Breast epithelium (tissue), 4 donors: ENCODE measurements at regions of chr19 and their contacts with region 1.

Region 1: GRCh38 chr19:9044449-9044848 is 34.2 kb upstream of the MUC16 start:
- DNase-seq: no peak
- H3K4me3 ChIP-seq: no peak overlapping the region
- H3K27ac ChIP-seq: no peak overlapping the region
- H3K4me1 ChIP-seq: no peaks in the 10 kb centered on the region
- H3K27me3 ChIP-seq: no peaks in the 10 kb centered on the region
- CTCF ChIP-seq: no peak
- POLR2A ChIP-seq: no peak

Region 2: DNA sequence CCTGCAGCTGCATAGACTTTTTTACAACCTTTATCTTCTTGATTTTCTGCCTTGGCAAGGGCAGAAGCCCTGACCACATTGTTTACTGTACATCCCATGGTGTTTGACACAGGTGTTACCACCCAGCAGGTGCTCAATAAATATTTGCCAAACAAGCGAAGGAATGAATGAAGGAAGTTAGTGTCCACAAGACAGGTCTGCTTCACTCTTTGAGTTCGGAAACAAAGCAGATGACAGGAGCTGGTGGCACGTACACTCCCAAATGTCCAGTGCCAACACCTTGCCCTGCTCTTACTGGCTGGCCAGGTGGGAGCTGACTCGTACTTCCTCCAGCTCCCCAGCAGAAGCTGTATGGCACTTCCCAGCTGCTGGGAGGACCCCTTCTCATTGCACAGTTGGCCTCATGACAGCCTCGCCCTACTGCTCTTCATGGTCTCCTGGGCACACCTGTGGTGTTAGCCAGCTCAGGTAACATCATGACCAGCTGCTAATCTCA is 12.3 kb before region 1 on chr19:
- intact Hi-C with region 1: loop called (anchors 2 kb)
- DNase-seq: no peak
- H3K4me3 ChIP-seq: no peak overlapping the region
- H3K27ac ChIP-seq: no peak overlapping the region
- H3K4me1 ChIP-seq: no peaks in the 10 kb centered on the region
- H3K27me3 ChIP-seq: peaks cover 0 to 12% of the 10 kb centered on the region in 2 donors
- CTCF ChIP-seq: no peak
- POLR2A ChIP-seq: no peak

Region 3: GRCh38 chr19:10625003-10625776 is 1580.7 kb after region 1 on chr19 and contains the start of gene SLC44A2:
- intact Hi-C with region 1: no loop called
- DNase-seq: peak; percentile 80 to 95
- H3K4me3 ChIP-seq: peak within 1 kb of the TSS; percentile 52 to 89 (median 82)
- H3K27ac ChIP-seq: peak within 1 kb of the TSS; percentile 92 to 95
- H3K4me1 ChIP-seq: peaks cover 0 to 15% of the 10 kb centered on the region in 2 donors
- H3K27me3 ChIP-seq: no peaks in the 10 kb centered on the region
- CTCF ChIP-seq: no peak
- POLR2A ChIP-seq: peak; percentile 25
- total RNA-seq, gene SLC44A2: 63.0 to 92.5 (median 67.5) TPM